HEK293 (cell line): ENCODE measurements at regions of chr21 and their contacts with region 1.

Region 1: GRCh38 chr21:29343519-29343918 is 44.8 kb downstream of the BACH1 start:
- H3K4me3 ChIP-seq: no peak overlapping the region
- H3K27ac ChIP-seq: no peak overlapping the region
- H3K4me1 ChIP-seq: peaks cover 12% of the 10 kb centered on the region
- CTCF ChIP-seq: no peak

Region 2: DNA sequence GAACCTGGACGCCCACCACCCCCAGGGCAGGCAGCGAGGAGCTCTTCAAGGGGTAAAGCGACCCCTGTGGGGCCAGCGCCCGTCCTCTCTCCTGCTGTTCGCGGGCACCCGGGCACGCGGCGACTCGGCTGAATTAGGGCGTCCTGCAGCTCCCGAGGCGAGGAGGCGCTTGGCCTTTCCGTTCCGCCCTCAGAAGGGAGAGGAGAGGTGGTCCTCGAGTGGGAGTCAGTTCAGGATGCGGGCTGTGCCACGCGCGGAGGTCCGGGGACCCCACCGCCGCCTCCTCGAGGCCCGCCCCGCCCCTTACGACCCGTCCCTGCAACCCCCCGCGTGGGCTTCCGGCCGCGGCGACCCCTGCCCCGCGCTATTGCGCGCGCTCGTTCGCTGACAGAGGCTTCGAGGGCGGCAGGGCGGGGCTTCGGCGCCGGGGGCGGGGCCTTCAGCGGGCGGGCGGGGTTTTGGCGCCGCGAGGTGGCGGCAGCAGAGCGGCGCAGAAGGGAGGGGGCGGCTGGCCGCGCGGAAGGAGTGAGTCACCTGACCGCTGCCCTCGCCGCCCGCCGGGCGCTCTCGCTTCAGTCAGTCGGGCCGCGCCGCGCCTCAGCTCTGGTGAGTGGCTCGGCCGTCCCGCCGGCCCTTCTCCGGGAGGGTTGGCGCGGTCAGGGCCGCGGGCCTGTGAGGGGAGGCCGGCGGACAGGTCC is 45.0 kb before region 1 on chr21 and contains the start of gene BACH1:
- CTCF ChIA-PET with region 1: interaction called, 13 read pairs
- POLR2A ChIA-PET with region 1: interaction called, 4 read pairs
- H3K4me3 ChIP-seq: peak within 1 kb of the TSS; percentile 54
- H3K27ac ChIP-seq: peak within 1 kb of the TSS; percentile 73; the same call in 1 of the 2 replicates
- H3K4me1 ChIP-seq: peaks cover 18% of the 10 kb centered on the region; the same call in 1 of the 2 replicates
- CTCF ChIP-seq: no peak; the same call in 1 of the 2 replicates

Region 3: GRCh38 chr21:29360799-29361765 is 17.6 kb after region 1 on chr21:
- CTCF ChIA-PET with region 1: interaction called, 11 read pairs
- POLR2A ChIA-PET with region 1: no interaction called
- H3K4me3 ChIP-seq: no peak overlapping the region
- H3K27ac ChIP-seq: no peak overlapping the region
- H3K4me1 ChIP-seq: no peaks in the 10 kb centered on the region
- CTCF ChIP-seq: no peak

Region 4: DNA sequence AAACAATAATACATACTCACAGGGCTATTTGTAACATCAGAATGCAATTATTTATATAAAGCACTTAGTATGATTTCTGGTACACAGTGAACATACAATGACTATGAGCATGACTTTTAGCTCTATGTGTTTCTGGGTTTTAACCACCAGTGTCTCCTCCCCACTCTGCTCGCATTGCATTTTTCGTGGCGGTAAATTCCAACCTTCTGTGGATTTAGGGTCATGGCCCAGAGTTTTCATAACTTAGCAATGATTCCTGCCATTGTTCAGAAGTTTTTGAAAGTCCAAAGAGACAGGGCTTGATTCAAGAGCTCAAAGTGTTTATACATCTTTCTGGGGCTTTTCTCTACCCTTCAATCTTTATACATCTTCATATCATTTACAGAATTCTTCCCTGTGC is 146.5 kb after region 1 on chr21:
- CTCF ChIA-PET with region 1: no interaction called
- POLR2A ChIA-PET with region 1: no interaction called
- H3K4me3 ChIP-seq: no peak overlapping the region
- H3K27ac ChIP-seq: no peak overlapping the region
- H3K4me1 ChIP-seq: no peaks in the 10 kb centered on the region
- CTCF ChIP-seq: no peak

Region 5: GRCh38 chr21:29546071-29546470 is 202.6 kb after region 1 on chr21:
- CTCF ChIA-PET with region 1: no interaction called
- POLR2A ChIA-PET with region 1: no interaction called
- H3K4me3 ChIP-seq: no peak overlapping the region
- H3K27ac ChIP-seq: no peak overlapping the region
- H3K4me1 ChIP-seq: no peaks in the 10 kb centered on the region
- CTCF ChIP-seq: no peak